ENCODE measurements at regions of chr22 and their contacts with region 1.

Region 1: DNA sequence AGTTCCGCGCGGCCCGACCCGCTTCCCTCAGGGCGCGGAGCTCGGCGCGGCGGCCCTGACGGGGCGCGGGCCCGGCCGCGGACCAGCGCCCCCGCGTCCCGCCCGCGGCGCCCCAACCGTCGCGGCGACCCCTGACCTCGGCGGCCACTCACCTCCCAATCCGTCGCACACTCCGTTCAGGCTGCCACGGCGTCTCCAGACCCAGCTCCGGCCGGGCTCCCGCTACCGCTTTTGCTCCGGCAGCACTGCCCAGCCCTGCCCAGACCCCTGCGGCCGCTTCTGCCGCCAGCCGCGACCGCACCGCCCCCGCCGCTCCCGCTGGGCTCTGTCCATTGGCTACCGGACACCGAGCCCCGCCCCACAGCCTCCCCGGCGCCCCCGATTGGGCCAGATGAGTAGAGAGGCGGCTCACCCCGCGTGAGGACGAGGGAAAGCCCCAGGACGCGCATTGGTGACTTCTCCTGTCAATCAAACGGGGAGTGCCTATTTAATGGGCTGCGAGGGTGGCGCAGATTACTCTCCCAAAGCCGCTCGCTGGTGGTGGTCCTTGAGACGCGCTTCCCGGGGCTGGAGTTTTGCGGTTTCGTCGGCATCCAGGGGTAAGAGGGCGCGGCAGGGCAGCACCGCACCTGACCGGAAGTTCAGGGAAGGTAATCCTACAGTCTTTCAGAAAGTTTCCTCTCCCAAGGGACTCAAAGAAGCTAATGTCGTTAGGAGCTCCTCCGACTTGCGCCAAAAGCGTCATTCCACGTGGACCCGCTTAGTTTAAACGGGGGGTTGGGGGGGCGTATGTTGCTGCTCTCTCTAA is at the start of gene PACSIN2:
- DNase-seq: peak; percentile 74
- H3K4me3 ChIP-seq: peak within 1 kb of the TSS; percentile 59
- H3K27me3 ChIP-seq: no peaks in the 10 kb centered on the region
- CTCF ChIP-seq: no peak
- polyA plus RNA-seq, gene PACSIN2: 64.4 and 86.3 TPM in 2 replicates

Region 2: DNA sequence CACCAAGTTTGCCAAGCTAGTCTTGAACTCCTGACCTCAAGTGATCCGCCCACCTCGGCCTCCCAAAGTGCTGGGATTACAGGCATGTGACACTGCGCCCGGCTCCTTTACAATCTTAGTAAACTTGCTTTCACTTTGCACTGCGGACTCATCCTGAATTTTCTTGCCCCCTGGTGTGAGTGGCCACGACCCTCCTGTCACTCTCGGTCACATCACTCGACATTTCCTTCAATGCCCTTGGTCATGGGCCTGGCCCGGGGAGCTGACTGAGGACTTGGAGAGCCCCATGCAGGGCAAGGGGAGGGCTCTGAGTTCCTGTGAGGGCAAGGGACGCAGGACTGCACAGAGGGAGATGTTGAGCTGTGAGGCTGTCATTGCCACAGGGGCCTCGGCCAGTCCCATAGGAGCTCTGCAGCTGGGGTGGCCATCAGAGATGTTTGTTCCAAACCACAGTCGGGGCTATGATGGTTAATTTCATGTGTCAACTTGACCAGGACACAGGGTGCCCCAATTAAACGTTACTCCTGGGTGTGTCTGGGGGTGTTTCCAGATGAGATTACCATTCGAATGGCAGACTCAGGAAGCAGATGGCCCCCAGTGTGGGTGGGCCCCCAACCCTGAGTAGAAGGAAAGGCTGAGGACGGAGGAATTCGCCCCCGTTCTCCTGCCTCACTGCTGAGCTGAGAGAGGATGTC is 315.6 kb before region 1 on chr22:
- CTCF ChIA-PET with region 1: no interaction called
- POLR2A ChIA-PET with region 1: interaction called, 13 read pairs
- DNase-seq: no peak
- H3K4me3 ChIP-seq: no peak overlapping the region
- H3K27me3 ChIP-seq: no peaks in the 10 kb centered on the region
- CTCF ChIP-seq: no peak

Region 3: GRCh38 chr22:42841444-42841843 is 173.6 kb before region 1 on chr22:
- CTCF ChIA-PET with region 1: no interaction called
- POLR2A ChIA-PET with region 1: interaction called, 16 read pairs
- DNase-seq: no peak
- H3K4me3 ChIP-seq: no peak overlapping the region
- H3K27me3 ChIP-seq: no peaks in the 10 kb centered on the region
- CTCF ChIP-seq: no peak

Region 4: GRCh38 chr22:42984814-42985552 is 30.1 kb before region 1 on chr22:
- CTCF ChIA-PET with region 1: no interaction called
- POLR2A ChIA-PET with region 1: interaction called, 13 read pairs
- DNase-seq: no peak
- H3K4me3 ChIP-seq: no peak overlapping the region
- H3K27me3 ChIP-seq: no peaks in the 10 kb centered on the region
- CTCF ChIP-seq: no peak

Region 5: GRCh38 chr22:42997577-42998090 is 17.4 kb before region 1 on chr22:
- CTCF ChIA-PET with region 1: interaction called, 3 read pairs
- POLR2A ChIA-PET with region 1: interaction called, 10 read pairs
- DNase-seq: no peak
- H3K4me3 ChIP-seq: no peak overlapping the region
- H3K27me3 ChIP-seq: no peaks in the 10 kb centered on the region
- CTCF ChIP-seq: no peak

Region 6: GRCh38 chr22:43036282-43036829 is 21.3 kb after region 1 on chr22:
- CTCF ChIA-PET with region 1: interaction called, 10 read pairs
- POLR2A ChIA-PET with region 1: no interaction called
- DNase-seq: peak; percentile 78
- H3K4me3 ChIP-seq: no peak overlapping the region
- H3K27me3 ChIP-seq: no peaks in the 10 kb centered on the region
- CTCF ChIP-seq: no peak

Region 7: DNA sequence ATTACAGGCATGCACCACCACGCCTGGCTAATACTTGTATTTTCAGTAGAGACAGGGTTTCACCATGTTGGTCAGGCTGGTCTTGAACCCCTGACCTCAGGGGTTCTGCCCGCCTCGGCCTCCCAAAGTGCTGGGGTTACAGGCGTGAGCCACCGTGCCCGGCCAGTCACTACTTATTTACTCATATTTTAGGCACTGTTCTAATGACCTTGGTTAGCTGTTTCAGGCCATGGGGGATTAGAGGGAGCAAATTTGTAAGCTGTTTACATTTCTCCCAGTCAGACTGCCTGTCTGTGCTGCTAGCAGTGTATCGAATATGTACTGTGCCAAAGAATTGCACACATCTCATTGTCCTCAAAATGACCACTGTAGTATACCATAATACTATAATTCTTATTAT is 32.5 kb after region 1 on chr22:
- CTCF ChIA-PET with region 1: no interaction called
- POLR2A ChIA-PET with region 1: no interaction called
- DNase-seq: no peak
- H3K4me3 ChIP-seq: no peak overlapping the region
- H3K27me3 ChIP-seq: no peaks in the 10 kb centered on the region
- CTCF ChIP-seq: no peak